Activated T-helper 2 cell treated with anti-CD3 and anti-CD28 coated beads, Interferon-gamma antibody, Interleukin-2, Interleukin-4, amounts not matched to agents 10 μg/mL and 5 μg/mL and 100 μg/mL, durations not matched to agents 14 hours and 24 hours and 36 hours (primary cell): ENCODE measurements at regions of chrX and their contacts with region 1.

Region 1: DNA sequence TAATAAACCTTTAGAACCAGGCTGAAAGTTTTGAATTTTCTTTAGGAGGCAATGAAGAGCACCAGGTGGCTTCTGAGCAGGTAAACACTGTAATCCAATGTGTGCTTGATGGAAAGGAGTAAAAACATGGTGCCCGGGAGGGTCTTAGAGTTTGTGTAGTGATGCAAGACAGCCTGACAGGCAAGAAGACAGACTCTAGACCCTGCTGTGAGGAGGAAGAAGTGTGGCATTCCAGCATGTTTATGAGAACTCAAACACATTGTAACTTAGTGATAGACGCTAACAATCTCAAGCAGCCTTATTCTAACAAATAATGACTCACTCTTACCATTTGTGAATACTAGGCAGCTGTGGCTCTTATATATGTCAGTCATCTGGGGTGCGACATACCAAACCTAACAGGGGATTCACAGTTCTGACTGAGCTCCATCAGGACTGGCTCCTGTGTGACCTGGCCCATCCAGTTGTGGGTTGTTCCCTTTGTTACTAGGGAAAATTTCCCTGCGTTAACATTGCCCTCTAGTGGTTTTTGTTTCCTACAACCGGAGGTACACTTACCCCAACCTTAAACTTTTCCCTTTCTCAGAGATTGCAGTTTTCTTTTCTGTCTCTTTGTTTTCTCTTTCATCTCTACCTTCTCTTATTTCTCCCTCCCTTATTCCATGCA is 53.8 kb downstream of the VSIG4 start:
- DNase-seq: peak; percentile 10
- H3K4me3 Mint-ChIP-seq: no peak overlapping the region
- H3K27ac Mint-ChIP-seq: no peak overlapping the region
- H3K4me1 Mint-ChIP-seq: peaks cover 18% of the 10 kb centered on the region
- H3K27me3 Mint-ChIP-seq: no peaks in the 10 kb centered on the region

Region 2: DNA sequence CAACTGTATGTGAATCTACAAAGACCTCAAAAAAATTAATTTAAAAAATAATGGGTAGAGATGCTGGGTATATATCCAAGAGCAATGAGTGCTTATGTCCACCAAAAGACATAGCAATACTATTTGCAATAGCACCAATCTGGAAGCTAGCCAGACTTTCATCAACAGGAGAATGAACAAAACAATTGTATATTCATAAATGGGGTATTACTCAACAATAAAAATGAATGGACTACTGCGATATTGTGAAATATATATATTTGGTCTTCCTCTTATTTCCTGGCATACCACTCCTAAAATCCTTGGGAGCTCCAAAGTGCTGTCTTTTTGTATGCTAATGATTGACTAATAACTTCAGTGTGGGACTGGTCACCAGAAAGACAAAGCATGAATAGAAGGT is 241.1 kb before region 1 on chrX:
- intact Hi-C with region 1: loop called (anchors 5 kb)
- DNase-seq: no peak
- H3K4me3 Mint-ChIP-seq: no peak overlapping the region
- H3K27ac Mint-ChIP-seq: no peak overlapping the region
- H3K4me1 Mint-ChIP-seq: peaks cover 48% of the 10 kb centered on the region
- H3K27me3 Mint-ChIP-seq: no peaks in the 10 kb centered on the region

Region 3: DNA sequence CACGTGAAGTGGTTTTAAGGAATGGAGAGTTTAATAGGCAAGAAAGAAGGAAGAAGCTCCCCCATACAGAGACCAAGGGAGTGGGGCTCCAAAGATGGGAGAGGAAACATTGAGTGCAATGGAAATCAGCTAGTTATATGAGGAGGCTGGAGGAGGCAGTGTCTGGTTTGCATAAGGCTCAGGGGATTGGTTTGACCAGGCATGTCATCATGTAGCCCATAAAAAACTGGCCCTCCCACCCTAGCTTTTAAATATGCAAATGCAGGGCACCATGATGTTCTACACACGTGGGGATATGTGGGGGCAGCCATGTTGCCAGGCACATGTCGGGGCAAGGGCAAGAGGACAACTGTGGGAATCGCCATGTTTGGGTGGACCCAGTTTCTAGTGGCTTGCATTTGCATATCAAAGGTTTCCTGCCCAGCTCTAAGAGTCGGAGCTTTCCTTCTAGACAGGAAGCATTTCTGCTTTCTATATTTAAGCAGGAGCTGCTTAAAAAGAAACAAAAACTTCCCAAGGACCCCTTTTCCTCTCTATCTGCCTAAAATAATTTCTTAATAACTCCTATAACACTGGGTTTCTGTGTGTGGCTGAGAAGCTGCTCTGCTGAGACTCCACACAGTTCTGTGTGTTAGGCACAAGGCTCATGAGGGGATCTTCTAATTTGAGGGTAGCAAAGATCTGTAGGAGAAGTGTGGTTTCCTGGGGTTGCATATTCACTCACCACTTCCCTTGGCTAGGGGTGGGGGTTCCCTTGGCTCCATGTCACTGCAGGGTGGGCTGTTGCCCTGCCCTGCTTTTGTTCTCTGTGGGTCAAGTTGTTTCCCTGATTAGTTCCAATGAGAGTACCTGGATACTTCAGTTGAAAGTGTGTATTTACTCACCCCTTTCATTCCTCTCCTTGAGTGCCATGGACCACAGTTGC is 59.7 kb before region 1 on chrX:
- intact Hi-C with region 1: loop called (anchors 5 kb)
- DNase-seq: peak; percentile 47
- H3K4me3 Mint-ChIP-seq: no peak overlapping the region
- H3K27ac Mint-ChIP-seq: peak overlapping the region; percentile 67
- H3K4me1 Mint-ChIP-seq: peaks cover 41% of the 10 kb centered on the region
- H3K27me3 Mint-ChIP-seq: no peaks in the 10 kb centered on the region

Region 4: GRCh38 chrX:66437719-66438118 is 451.7 kb after region 1 on chrX:
- intact Hi-C with region 1: no loop called
- DNase-seq: no peak
- H3K4me3 Mint-ChIP-seq: no peak overlapping the region
- H3K27ac Mint-ChIP-seq: no peak overlapping the region
- H3K4me1 Mint-ChIP-seq: no peaks in the 10 kb centered on the region
- H3K27me3 Mint-ChIP-seq: no peaks in the 10 kb centered on the region